GM12878 (cell line): ENCODE measurements at regions of chr9 and their contacts with region 1.

Region 1: GRCh38 chr9:94213511-94214124 is 45.5 kb upstream of the ZNF169 start:
- DNase-seq: peak; percentile 50
- ATAC-seq: peak; percentile 100
- H3K4me3 ChIP-seq: no peak overlapping the region
- H3K27ac ChIP-seq: no peak overlapping the region
- H3K4me1 ChIP-seq: no peaks in the 10 kb centered on the region
- H3K27me3 ChIP-seq: no peaks in the 10 kb centered on the region; a peak in 1 of 4 replicates
- CTCF ChIP-seq: peak; percentile 65 to 96 (median 72); a peak in 5 of 6 replicates
- EP300 ChIP-seq: no peak
- POLR2A ChIP-seq: no peak
- RAD21 ChIP-seq: peak; percentile 94

Region 2: GRCh38 chr9:93682232-93682968 is 531.2 kb before region 1 on chr9:
- CTCF ChIA-PET with region 1: no interaction called
- POLR2A ChIA-PET with region 1: no interaction called
- RAD21 ChIA-PET with region 1: no interaction called
- SMC1A ChIA-PET with region 1: no interaction called
- in situ Hi-C with region 1: no loop called
- intact Hi-C with region 1: loop called (anchors 10 kb)
- DNase-seq: no peak
- ATAC-seq: peak; percentile 91
- H3K4me3 ChIP-seq: no peak overlapping the region
- H3K27ac ChIP-seq: no peak overlapping the region
- H3K4me1 ChIP-seq: no peaks in the 10 kb centered on the region
- H3K27me3 ChIP-seq: no peaks in the 10 kb centered on the region
- CTCF ChIP-seq: peak; percentile 75 to 80 (median 79)
- EP300 ChIP-seq: no peak
- POLR2A ChIP-seq: no peak
- RAD21 ChIP-seq: peak; percentile 88

Region 3: DNA sequence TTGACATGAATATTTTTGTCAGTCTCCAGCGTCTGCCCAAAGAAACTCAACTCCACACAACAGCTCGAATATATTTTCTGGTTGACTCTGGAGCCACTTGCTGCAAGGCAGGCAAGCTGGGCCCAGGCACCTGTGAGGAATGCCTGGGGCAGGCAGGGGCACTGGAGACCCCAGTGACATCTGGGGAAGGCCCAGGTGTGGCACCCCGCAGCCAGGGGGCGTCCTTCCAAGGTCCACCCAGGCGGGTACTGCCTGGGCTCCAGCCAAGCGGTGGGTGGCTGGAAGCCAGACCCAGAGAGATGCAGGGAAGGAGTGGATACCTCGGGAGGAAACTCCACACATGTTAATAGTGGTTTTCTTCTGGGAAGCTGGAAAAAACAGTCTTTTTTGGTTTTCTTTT is 511.3 kb before region 1 on chr9:
- CTCF ChIA-PET with region 1: no interaction called
- POLR2A ChIA-PET with region 1: no interaction called
- RAD21 ChIA-PET with region 1: no interaction called
- SMC1A ChIA-PET with region 1: no interaction called
- in situ Hi-C with region 1: no loop called
- intact Hi-C with region 1: no loop called
- DNase-seq: no peak
- ATAC-seq: no peak
- H3K4me3 ChIP-seq: no peak overlapping the region
- H3K27ac ChIP-seq: no peak overlapping the region
- H3K4me1 ChIP-seq: no peaks in the 10 kb centered on the region
- H3K27me3 ChIP-seq: no peaks in the 10 kb centered on the region
- CTCF ChIP-seq: no peak
- EP300 ChIP-seq: no peak
- POLR2A ChIP-seq: no peak
- RAD21 ChIP-seq: no peak

Region 4: DNA sequence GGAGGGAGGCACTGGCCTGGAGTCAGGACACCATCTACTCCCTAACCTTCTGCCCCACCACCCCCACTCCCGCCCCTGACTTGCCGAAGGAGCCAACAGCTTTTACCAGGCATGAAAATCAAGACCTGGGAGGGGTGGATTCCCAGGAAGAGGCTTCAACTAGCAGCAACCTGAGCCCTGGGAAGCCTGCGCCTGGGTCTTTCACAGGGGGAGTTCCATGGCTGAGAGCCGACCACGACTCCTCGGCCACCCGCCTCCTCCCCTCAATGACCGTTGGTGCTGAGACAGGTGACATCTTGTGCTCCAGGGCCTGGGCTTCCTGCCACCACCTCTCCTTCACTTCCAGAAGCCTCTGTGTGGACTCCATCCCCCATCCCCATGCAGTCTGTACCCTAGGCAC is 295.6 kb before region 1 on chr9:
- CTCF ChIA-PET with region 1: no interaction called
- POLR2A ChIA-PET with region 1: no interaction called
- RAD21 ChIA-PET with region 1: no interaction called
- SMC1A ChIA-PET with region 1: no interaction called
- in situ Hi-C with region 1: no loop called
- intact Hi-C with region 1: no loop called
- DNase-seq: no peak
- ATAC-seq: no peak
- H3K4me3 ChIP-seq: no peak overlapping the region
- H3K27ac ChIP-seq: no peak overlapping the region
- H3K4me1 ChIP-seq: no peaks in the 10 kb centered on the region
- H3K27me3 ChIP-seq: no peaks in the 10 kb centered on the region; a peak in 2 of 4 replicates
- CTCF ChIP-seq: no peak
- EP300 ChIP-seq: no peak
- POLR2A ChIP-seq: no peak
- RAD21 ChIP-seq: no peak

Region 5: GRCh38 chr9:94014065-94014654 is 199.5 kb before region 1 on chr9:
- CTCF ChIA-PET with region 1: interaction called, 89 read pairs
- POLR2A ChIA-PET with region 1: no interaction called
- RAD21 ChIA-PET with region 1: interaction called, 19 read pairs
- SMC1A ChIA-PET with region 1: interaction called, 18 read pairs
- in situ Hi-C with region 1: no loop called
- intact Hi-C with region 1: loop called (anchors 2 kb)
- DNase-seq: no peak
- ATAC-seq: peak; percentile 53; the same call in 2 of the 3 replicates
- H3K4me3 ChIP-seq: no peak overlapping the region
- H3K27ac ChIP-seq: no peak overlapping the region
- H3K4me1 ChIP-seq: no peaks in the 10 kb centered on the region
- H3K27me3 ChIP-seq: no peaks in the 10 kb centered on the region
- CTCF ChIP-seq: peak; percentile 42 to 55 (median 51)
- EP300 ChIP-seq: no peak
- POLR2A ChIP-seq: no peak
- RAD21 ChIP-seq: peak; percentile 45

Region 6: DNA sequence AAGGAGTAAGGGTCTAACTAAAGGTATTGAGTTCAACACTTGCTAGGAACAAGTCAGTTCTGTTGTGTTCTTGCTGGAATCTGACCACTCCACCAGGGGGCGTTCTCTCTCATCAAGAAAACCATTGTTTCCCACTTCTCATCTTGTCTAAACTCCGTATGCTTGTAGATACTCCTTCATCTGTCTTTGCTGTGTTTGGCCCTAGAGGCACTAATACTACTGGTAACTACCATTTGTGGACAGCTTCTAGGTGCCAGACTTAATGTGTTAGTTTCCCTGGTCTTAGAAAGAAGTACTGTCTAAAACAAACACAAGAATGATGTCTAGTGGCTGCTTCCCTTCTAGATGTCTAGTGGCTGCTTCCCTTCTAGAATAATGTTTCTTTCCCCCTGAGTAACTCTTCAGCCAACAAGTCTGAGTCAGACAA is 148.1 kb before region 1 on chr9:
- CTCF ChIA-PET with region 1: interaction called, 253 read pairs
- POLR2A ChIA-PET with region 1: no interaction called
- RAD21 ChIA-PET with region 1: interaction called, 69 read pairs
- SMC1A ChIA-PET with region 1: interaction called, 141 read pairs
- in situ Hi-C with region 1: loop called (anchors 5 kb)
- intact Hi-C with region 1: loop called (anchors 1 kb)
- DNase-seq: peak; percentile 40
- ATAC-seq: peak; percentile 86
- H3K4me3 ChIP-seq: no peak overlapping the region
- H3K27ac ChIP-seq: no peak overlapping the region
- H3K4me1 ChIP-seq: no peaks in the 10 kb centered on the region
- H3K27me3 ChIP-seq: no peaks in the 10 kb centered on the region
- CTCF ChIP-seq: peak; percentile 72 to 83 (median 74)
- EP300 ChIP-seq: no peak
- POLR2A ChIP-seq: no peak
- RAD21 ChIP-seq: peak; percentile 87

Region 7: DNA sequence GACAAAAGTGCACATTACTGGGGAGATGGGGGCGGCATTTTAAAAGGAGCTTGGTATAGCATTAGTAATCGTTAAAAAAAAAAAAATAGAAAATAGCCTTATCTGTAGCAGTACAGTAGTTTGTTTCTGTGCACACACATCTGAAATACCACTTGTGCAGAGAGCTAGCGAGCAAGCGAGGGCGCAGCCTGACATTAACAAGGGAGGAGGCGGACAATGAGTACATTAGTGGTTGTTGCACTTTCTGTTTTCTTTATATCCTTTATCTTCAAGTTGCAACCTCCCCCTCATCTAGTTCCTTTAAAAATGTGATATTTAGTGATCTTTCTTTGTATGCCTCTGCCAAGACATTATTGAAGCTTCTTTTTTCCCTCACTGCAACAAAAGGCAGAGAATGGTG is 130.2 kb before region 1 on chr9:
- CTCF ChIA-PET with region 1: interaction called, 13 read pairs
- POLR2A ChIA-PET with region 1: interaction called, 11 read pairs
- RAD21 ChIA-PET with region 1: no interaction called
- SMC1A ChIA-PET with region 1: interaction called, 3 read pairs
- in situ Hi-C with region 1: no loop called
- intact Hi-C with region 1: no loop called
- DNase-seq: no peak
- ATAC-seq: no peak
- H3K4me3 ChIP-seq: no peak overlapping the region
- H3K27ac ChIP-seq: no peak overlapping the region
- H3K4me1 ChIP-seq: 0 out of 2 replicates have a peak, but pooled peaks cover 5% of the 10 kb centered on the region
- H3K27me3 ChIP-seq: no peaks in the 10 kb centered on the region
- CTCF ChIP-seq: no peak
- EP300 ChIP-seq: no peak
- POLR2A ChIP-seq: no peak
- RAD21 ChIP-seq: no peak

Region 8: DNA sequence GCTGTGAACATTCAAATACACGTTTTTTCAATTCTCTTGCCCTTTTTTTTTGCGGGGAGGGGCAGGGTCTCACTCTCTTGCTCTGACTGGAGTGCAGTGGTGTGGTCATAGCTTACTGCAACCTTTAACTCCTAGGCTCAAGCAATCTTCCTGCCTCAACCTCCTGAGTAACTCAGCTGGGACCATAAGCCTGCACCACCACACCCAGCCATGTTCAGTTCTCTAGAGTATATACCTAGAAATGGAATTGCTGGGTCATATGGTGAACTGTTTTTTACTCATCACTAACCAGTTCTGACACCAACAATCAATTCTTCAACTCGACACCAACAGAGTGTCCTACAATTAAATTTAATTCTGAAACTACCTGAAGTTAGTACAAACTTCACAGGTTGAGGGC is 40.0 kb before region 1 on chr9:
- CTCF ChIA-PET with region 1: interaction called, 15 read pairs
- POLR2A ChIA-PET with region 1: interaction called, 3 read pairs
- RAD21 ChIA-PET with region 1: interaction called, 4 read pairs
- SMC1A ChIA-PET with region 1: interaction called, 11 read pairs
- in situ Hi-C with region 1: no loop called
- intact Hi-C with region 1: no loop called
- DNase-seq: no peak
- ATAC-seq: peak; percentile 63
- H3K4me3 ChIP-seq: peak overlapping the region; percentile 33
- H3K27ac ChIP-seq: peak overlapping the region; percentile 27; the same call in 1 of the 2 replicates
- H3K4me1 ChIP-seq: peaks cover 57% of the 10 kb centered on the region
- H3K27me3 ChIP-seq: no peaks in the 10 kb centered on the region
- CTCF ChIP-seq: no peak
- EP300 ChIP-seq: no peak; a peak in 1 of 4 replicates
- POLR2A ChIP-seq: no peak
- RAD21 ChIP-seq: no peak